Left lung (tissue), 14 donors: ENCODE measurements at regions of chr14 and their contacts with region 1.

Region 1: DNA sequence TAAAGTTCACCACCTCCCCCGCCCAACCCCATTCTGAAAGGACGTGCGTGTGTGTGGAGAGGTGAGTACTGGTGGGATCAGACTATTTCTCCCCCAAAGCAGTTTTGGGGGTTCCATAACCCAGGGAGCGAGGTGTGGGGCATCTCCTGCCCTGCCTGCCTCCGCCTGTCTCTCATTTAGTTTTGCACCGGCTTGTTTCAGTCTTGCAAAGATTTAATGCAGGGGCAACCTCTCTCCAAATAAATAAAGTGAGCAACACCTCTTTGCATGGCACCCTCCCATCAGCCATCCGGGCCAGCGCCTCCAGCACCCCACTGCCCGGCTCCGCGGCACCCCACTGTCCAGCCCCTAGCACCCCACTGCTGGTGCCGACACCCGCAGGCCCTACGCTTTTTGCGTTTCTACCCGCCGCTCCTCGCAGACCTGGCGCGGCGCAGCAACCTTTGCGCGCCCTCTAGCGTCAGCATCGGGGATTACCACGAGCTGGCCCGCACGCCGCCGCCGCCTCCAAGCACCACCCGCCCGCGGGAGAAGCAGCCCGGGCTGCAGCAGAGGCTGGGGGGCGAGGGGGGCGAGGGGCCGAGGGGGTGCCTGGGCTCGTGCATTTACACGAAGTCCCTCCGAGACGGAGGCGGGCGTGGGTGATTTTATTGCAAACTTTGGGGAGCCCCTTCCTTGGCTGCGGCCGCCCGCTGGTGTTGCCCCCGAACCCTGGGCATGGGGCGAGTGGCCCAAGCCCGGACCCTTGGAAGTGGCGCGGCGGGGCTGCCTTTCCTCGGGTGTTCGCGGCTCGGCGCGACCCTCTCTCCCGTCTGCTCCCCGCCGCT is 55.8 kb upstream of the VRK1 start:
- DNase-seq: peak; percentile 47 to 95 (median 63)
- ATAC-seq: peak; percentile 98
- H3K4me3 ChIP-seq: peak overlapping the region in 1 of 2 donors; percentile 16
- H3K27ac ChIP-seq: no peak overlapping the region
- H3K4me1 ChIP-seq: peaks cover 4 to 9% of the 10 kb centered on the region in 2 donors
- H3K27me3 ChIP-seq: peaks cover 47 to 91% of the 10 kb centered on the region in 2 donors
- CTCF ChIP-seq: peak; percentile 87 to 93

Region 2: GRCh38 chr14:96574633-96575632 is 166.4 kb before region 1 on chr14:
- intact Hi-C with region 1: loop called in 1 of 2 experiments (anchors 10 kb)
- DNase-seq: no peak
- ATAC-seq: peak; percentile 41
- H3K4me3 ChIP-seq: no peak overlapping the region
- H3K27ac ChIP-seq: no peak overlapping the region
- H3K4me1 ChIP-seq: peaks cover 0 to 4% of the 10 kb centered on the region in 2 donors
- H3K27me3 ChIP-seq: no peaks in the 10 kb centered on the region
- CTCF ChIP-seq: no peak